ENCODE measurements at regions of chr15 and their contacts with region 1.

Region 1: DNA sequence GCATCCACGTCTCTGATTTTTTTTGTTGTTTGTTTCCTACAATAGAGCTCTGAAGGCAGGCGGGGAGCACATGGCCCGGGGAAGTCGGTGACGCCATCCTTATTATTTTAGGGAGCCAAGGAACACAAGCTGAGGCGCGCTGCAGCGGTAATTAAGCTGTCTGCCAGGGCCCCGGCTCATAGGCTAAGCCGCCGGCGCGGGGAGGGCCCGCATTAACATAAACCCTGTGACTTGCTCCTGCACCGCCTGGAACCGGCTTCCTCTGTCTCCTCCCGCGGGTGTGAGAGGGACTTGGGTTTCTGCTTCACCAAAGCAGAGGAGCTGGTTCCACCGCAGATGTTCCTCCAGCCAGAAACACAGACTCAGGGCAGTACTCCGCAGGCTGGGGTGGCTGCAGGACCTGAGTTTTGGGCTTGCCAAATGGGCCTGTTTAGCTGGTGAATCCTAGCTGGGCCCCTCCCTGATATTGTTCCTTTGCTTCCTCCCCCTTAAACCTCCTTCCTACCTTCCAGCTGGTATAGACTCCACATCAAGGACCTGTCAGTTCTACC is 25.3 kb downstream of the ANP32A start:
- DNase-seq: peak; percentile 85
- ATAC-seq: peak; percentile 54
- H3K4me3 Mint-ChIP-seq: peak overlapping the region; percentile 40
- H3K27ac Mint-ChIP-seq: peak overlapping the region; percentile 72
- H3K4me1 Mint-ChIP-seq: peaks cover 97% of the 10 kb centered on the region
- H3K27me3 Mint-ChIP-seq: no peaks in the 10 kb centered on the region
- CTCF ChIP-seq: no peak

Region 2: DNA sequence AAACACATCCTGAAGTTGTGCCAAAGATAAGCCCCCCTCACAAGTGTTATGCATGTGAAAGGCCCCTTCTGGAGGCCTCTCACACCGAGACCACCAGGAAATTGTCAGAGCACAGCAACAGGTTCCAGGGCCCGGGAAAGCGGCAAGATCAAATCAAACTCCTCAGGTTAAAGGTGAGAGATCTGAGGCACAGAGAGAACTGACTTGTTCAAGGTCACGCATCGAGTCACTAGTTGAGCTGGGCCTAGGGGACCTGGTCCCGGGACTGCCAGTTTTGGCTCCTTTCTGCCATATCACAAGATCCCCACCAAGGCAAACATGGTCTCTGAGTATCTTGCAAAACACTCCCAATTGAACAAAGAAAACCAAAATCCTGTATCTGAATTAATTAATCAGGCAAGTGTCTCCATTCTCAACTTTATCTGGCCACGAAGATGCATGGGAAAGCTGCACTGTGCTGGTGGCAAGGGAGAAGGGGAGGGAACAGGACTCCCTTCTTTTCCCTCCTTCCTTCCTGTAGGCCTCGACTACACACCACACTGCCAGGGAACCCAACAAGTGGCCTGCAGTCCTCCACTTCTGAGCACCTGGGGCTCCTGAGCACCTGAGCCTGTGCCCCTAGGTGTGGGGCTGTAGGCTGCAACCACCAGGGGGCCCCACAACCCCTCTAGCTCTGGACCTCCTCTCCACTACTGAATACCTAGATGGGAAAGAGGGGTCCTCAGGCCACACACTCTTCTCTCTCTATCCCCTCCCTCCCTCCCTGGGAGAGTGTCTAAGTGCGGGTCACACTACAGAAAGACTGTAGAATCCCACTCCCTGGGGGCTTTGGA is 11.9 kb before region 1 on chr15:
- CTCF ChIA-PET with region 1: interaction called, 15 read pairs
- POLR2A ChIA-PET with region 1: interaction called, 3 read pairs
- intact Hi-C with region 1: no loop called
- DNase-seq: peak; percentile 79
- ATAC-seq: peak; percentile 85
- H3K4me3 Mint-ChIP-seq: no peak overlapping the region
- H3K27ac Mint-ChIP-seq: peak overlapping the region; percentile 72
- H3K4me1 Mint-ChIP-seq: peaks cover 43% of the 10 kb centered on the region
- H3K27me3 Mint-ChIP-seq: no peaks in the 10 kb centered on the region
- CTCF ChIP-seq: peak; percentile 79

Region 3: DNA sequence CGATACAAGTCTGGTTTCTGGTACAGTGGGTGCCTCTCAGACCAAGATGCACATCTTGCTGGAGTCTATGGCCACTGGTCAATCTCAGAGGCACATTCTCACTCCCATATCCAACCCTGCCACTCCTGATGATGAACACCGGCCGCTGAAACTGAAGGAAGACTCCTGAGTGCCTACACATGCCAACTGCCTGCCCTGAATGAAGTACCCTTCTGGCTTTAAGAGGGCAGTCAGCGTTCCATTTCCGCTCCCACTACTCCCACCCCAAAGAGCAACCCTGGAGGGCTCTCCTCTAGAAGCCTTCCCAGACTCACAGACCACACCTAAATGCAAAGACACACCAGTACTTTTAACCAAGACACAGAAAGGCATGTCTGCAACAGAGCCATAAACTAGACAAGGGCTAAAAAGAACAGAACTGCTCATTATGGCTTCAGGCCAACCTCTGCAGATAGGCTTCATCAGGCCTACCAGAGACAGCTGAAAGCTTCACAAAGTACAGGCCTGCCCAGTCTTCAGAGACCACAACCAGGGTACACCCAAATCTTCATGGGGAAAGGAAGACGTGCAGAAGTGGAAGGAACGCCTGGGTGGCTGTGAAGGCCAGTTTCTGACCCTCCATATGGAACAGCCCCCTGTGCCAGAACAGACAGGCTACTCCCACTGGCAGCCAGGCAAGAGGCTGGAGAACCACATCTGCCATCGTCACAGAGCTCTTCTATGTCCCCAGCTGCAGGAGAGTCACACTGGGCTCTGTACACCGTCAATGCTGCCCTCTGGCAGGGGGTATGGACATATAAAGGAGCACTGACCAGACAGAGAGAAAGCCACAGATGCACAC is 11.1 kb after region 1 on chr15:
- CTCF ChIA-PET with region 1: interaction called, 3 read pairs
- POLR2A ChIA-PET with region 1: interaction called, 10 read pairs
- intact Hi-C with region 1: no loop called
- DNase-seq: no peak
- ATAC-seq: no peak
- H3K4me3 Mint-ChIP-seq: no peak overlapping the region
- H3K27ac Mint-ChIP-seq: peak overlapping the region; percentile 54
- H3K4me1 Mint-ChIP-seq: peaks cover 78% of the 10 kb centered on the region
- H3K27me3 Mint-ChIP-seq: no peaks in the 10 kb centered on the region
- CTCF ChIP-seq: no peak

Region 4: GRCh38 chr15:68820295-68821189 is 25.2 kb after region 1 on chr15 and contains the start of gene ANP32A:
- CTCF ChIA-PET with region 1: interaction called, 8 read pairs
- POLR2A ChIA-PET with region 1: interaction called, 51 read pairs
- intact Hi-C with region 1: no loop called
- DNase-seq: peak; percentile 96
- ATAC-seq: peak; percentile 78
- H3K4me3 Mint-ChIP-seq: peak within 1 kb of the TSS; percentile 88
- H3K27ac Mint-ChIP-seq: peak within 1 kb of the TSS; percentile 96
- H3K4me1 Mint-ChIP-seq: peaks cover 30% of the 10 kb centered on the region
- H3K27me3 Mint-ChIP-seq: no peaks in the 10 kb centered on the region
- CTCF ChIP-seq: no peak
- total RNA-seq, gene ANP32A: 239 to 246 TPM